GM10248 (cell line): ENCODE measurements at regions of chr4 and their contacts with region 1.

Region 1: GRCh38 chr4:53601251-53601764 is 10.0 kb upstream of the LNX1 start:
- DNase-seq: peak; percentile 36
- CTCF ChIP-seq: peak; percentile 32

Region 2: DNA sequence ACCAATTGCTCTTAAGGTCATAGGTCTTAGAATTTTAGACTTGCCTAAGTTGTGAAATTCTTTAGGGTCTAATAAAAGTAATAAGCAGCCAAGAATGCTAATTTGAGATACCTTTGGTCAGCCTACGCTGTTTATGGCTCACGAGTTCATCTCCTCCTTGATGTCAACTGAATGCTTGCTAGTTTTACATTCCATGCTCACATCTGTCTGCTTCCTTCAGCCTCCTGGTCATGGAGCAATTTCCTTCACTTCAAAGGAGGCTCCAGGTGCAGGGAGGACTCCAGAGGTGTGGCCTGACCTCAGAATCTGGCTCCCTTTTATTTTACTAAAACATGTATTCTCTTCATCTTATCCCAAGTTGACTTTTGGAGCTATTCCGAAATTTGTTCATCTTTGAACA is 13.3 kb after region 1 on chr4:
- CTCF ChIA-PET with region 1: interaction called, 10 read pairs
- POLR2A ChIA-PET with region 1: no interaction called
- DNase-seq: no peak
- CTCF ChIP-seq: no peak